ENCODE measurements at regions of chr3 and their contacts with region 1.

Region 1: DNA sequence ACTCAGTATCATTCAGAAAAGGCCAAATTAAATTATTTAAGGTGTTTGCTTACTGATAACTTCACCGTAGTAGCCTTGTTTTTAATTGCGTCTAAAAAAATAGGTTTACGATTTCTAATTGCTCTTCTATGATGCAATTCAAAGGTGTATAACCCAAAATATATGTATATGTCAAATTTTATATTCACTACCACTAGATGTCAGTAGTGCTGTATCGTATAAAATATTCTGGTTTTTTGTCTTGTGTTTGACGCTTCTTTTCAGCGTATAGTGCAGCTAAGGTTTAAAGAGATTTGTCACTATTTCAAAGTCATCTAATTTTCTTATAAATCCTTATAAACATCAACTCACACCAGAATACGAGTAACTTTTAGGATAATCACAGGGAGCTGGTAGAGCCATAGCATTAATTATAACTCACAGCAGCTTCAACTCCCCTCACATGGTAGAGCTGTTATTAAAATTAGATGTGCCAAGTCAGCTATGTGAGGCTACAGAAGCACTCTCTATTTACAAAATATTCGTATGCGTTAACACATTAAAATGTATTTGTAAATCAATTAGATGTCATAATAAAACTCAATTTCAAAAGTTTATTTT is 3.5 kb downstream of the PFN2 start:
- DNase-seq: no peak
- H3K4me3 ChIP-seq: no peak overlapping the region
- H3K27me3 ChIP-seq: no peaks in the 10 kb centered on the region
- CTCF ChIP-seq: peak; percentile 45

Region 2: GRCh38 chr3:150183678-150184425 is 216.7 kb after region 1 on chr3:
- CTCF ChIA-PET with region 1: interaction called, 79 read pairs
- POLR2A ChIA-PET with region 1: interaction called, 7 read pairs
- DNase-seq: no peak
- H3K4me3 ChIP-seq: peak overlapping the region; percentile 34
- H3K27me3 ChIP-seq: no peaks in the 10 kb centered on the region
- CTCF ChIP-seq: peak; percentile 77

Region 3: DNA sequence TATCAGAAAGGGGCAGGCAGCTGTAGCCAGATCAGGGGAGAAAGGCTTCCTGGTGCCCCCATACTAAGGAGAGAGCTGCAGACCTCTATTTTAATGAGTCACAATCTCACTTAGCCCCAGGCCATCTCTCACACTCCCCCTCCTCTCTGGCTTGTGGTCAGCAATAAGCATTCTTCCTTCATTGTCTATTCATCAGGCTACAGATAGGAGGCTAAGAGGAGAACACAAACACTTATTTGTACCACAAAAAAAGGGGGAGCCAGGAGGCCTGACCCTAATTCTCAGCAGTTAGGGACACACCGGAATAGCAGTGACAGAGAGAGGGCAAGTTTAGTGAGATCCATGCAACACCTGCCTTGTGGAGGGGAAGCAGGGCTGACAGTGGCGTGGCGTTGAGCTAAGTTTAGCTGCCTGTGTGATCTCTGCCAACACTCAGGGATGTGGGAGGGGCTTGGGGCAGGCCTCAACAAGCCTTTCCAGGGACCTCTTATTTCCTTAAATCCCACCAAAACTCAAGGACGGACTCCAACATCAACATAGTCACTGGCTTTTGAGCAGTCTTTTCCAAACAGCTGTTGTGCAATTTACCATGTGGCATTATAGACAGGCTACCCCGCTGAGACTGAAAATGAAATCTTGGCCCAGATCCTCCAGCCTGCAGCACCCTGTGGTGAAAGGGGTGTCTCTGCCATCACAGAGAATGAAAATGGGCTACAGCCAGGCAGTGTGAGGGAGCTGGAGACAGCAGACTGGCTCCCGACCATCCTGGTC is 249.0 kb after region 1 on chr3:
- CTCF ChIA-PET with region 1: interaction called, 38 read pairs
- POLR2A ChIA-PET with region 1: no interaction called
- DNase-seq: no peak
- H3K4me3 ChIP-seq: no peak overlapping the region
- H3K27me3 ChIP-seq: no peaks in the 10 kb centered on the region
- CTCF ChIP-seq: peak; percentile 25

Region 4: GRCh38 chr3:150227839-150228238 is 260.7 kb after region 1 on chr3:
- CTCF ChIA-PET with region 1: interaction called, 30 read pairs
- POLR2A ChIA-PET with region 1: no interaction called
- DNase-seq: no peak
- H3K4me3 ChIP-seq: no peak overlapping the region
- H3K27me3 ChIP-seq: no peaks in the 10 kb centered on the region
- CTCF ChIP-seq: peak; percentile 86

Measured in BJ (cell line).